GM13976 (cell line): ENCODE measurements at regions of chr21 and their contacts with region 1.

Region 1: GRCh38 chr21:25881525-25882376 is 147.0 kb downstream of the GABPA start:
- DNase-seq: peak; percentile 75
- CTCF ChIP-seq: peak; percentile 82

Region 2: DNA sequence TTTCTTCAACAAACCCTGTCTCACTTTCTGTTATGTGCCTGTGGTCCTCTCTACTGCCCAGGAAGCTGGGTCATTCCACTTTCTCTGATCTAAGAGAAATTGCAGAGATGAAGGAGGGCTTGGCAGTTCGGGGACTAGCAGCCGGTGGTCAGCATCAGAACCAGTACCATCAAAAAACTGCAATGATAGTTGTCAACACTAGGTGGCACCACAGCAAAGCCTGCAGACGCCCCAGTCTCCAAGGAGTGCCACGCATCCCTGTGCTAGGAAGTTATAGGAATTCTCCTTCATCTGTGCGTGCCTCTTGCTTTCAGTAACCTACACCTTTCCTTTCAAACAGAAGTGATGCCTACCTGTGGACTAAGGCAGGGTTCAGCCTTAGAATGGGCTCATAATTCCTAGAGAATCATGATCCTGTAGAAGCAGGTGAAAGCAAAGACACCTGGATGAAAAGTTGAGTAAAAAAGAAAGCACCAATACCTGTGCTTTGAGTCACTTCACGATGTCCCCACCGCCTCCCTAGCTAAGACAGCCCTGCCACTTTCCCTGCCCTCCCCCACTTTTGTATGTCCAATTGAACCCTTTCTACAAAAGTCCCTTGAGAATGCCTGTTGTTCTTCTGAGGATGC is 834.2 kb after region 1 on chr21:
- in situ Hi-C with region 1: loop called (anchors 25 kb)
- DNase-seq: peak; percentile 29
- CTCF ChIP-seq: peak; percentile 60